Heart left ventricle (tissue), 16 donors: ENCODE measurements at regions of chr18 and their contacts with region 1.

Region 1: GRCh38 chr18:24118750-24119577 is 19.9 kb upstream of the CABYR start:
- DNase-seq: peak in 4 of 5 donors; percentile 42 to 69 (median 53)
- ATAC-seq: peak in 3 of 4 donors; percentile 59 to 75 (median 71)
- H3K4me3 ChIP-seq: no peak overlapping the region
- H3K27ac ChIP-seq: no peak overlapping the region
- H3K4me1 ChIP-seq: peaks cover 0 to 8% (median 0%) of the 10 kb centered on the region in 12 donors
- H3K27me3 ChIP-seq: no peaks in the 10 kb centered on the region
- CTCF ChIP-seq: peak; percentile 85 to 97 (median 94)
- POLR2A ChIP-seq: no peak

Region 2: GRCh38 chr18:23317975-23318675 is 800.8 kb before region 1 on chr18:
- intact Hi-C with region 1: no loop called
- DNase-seq: no peak
- ATAC-seq: no peak
- H3K4me3 ChIP-seq: no peak overlapping the region
- H3K27ac ChIP-seq: no peak overlapping the region
- H3K4me1 ChIP-seq: no peaks in the 10 kb centered on the region
- H3K27me3 ChIP-seq: no peaks in the 10 kb centered on the region
- CTCF ChIP-seq: no peak
- POLR2A ChIP-seq: no peak

Region 3: GRCh38 chr18:23619388-23619881 is 499.5 kb before region 1 on chr18:
- intact Hi-C with region 1: loop called in 5 of 10 experiments (anchors 5 to 10 kb)
- DNase-seq: peak in 4 of 5 donors; percentile 19 to 66 (median 36)
- ATAC-seq: peak; percentile 40 to 76 (median 69)
- H3K4me3 ChIP-seq: peak overlapping the region; percentile 16 to 66 (median 48)
- H3K27ac ChIP-seq: peak overlapping the region in 2 of 12 donors; percentile 36 to 39
- H3K4me1 ChIP-seq: peaks cover 0 to 15% (median 4%) of the 10 kb centered on the region in 12 donors
- H3K27me3 ChIP-seq: peaks cover 0 to 30% (median 0%) of the 10 kb centered on the region in 9 donors
- CTCF ChIP-seq: peak in 1 of 12 donors; percentile 26
- POLR2A ChIP-seq: no peak

Region 4: GRCh38 chr18:23812546-23813440 is 306.2 kb before region 1 on chr18:
- intact Hi-C with region 1: loop called in 4 of 10 experiments (anchors 5 to 10 kb)
- DNase-seq: no peak
- ATAC-seq: no peak
- H3K4me3 ChIP-seq: no peak overlapping the region
- H3K27ac ChIP-seq: no peak overlapping the region
- H3K4me1 ChIP-seq: peaks cover 0 to 9% (median 0%) of the 10 kb centered on the region in 12 donors
- H3K27me3 ChIP-seq: no peaks in the 10 kb centered on the region
- CTCF ChIP-seq: peak; percentile 45 to 74 (median 59)
- POLR2A ChIP-seq: no peak

Region 5: GRCh38 chr18:23837591-23837990 is 281.4 kb before region 1 on chr18:
- intact Hi-C with region 1: loop called in 1 of 10 experiments (anchors 10 kb)
- DNase-seq: no peak
- ATAC-seq: peak in 3 of 4 donors; percentile 79 to 83 (median 81)
- H3K4me3 ChIP-seq: no peak overlapping the region
- H3K27ac ChIP-seq: peak overlapping the region in 8 of 12 donors; percentile 27 to 59 (median 35)
- H3K4me1 ChIP-seq: peaks cover 0 to 19% (median 9%) of the 10 kb centered on the region in 12 donors
- H3K27me3 ChIP-seq: no peaks in the 10 kb centered on the region
- CTCF ChIP-seq: no peak
- POLR2A ChIP-seq: no peak

Region 6: GRCh38 chr18:23900994-23901393 is 218.0 kb before region 1 on chr18:
- intact Hi-C with region 1: no loop called
- DNase-seq: peak in 1 of 5 donors; percentile 24
- ATAC-seq: peak in 3 of 4 donors; percentile 31 to 55 (median 38)
- H3K4me3 ChIP-seq: no peak overlapping the region
- H3K27ac ChIP-seq: no peak overlapping the region
- H3K4me1 ChIP-seq: peaks cover 0 to 8% (median 0%) of the 10 kb centered on the region in 12 donors
- H3K27me3 ChIP-seq: no peaks in the 10 kb centered on the region
- CTCF ChIP-seq: no peak
- POLR2A ChIP-seq: no peak

Region 7: DNA sequence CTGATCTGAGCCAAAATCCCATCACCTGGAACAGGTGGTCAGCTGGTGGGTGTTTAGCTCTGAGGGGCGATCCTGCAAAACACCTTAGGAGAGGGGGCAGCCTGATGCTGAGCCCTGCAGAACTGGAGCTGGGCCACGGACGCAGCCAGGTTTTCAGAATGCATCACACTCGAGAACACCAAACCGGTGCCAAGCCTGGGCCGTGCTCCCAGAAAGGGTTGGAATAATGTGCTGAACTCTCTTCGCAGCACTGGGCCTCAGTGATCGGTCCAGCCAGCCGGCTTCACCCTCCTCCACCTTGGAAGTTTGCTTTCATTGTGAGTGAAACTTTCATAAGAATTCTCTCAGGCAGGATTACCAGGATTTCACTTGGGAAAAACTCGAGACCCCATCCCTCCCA is 160.9 kb before region 1 on chr18:
- intact Hi-C with region 1: loop called in 6 of 10 experiments (anchors 5 to 10 kb)
- DNase-seq: peak; percentile 72 to 89 (median 81)
- ATAC-seq: peak; percentile 95 to 98 (median 98)
- H3K4me3 ChIP-seq: no peak overlapping the region
- H3K27ac ChIP-seq: peak overlapping the region in 3 of 12 donors; percentile 13 to 46 (median 35)
- H3K4me1 ChIP-seq: peaks cover 0 to 5% (median 0%) of the 10 kb centered on the region in 12 donors
- H3K27me3 ChIP-seq: no peaks in the 10 kb centered on the region
- CTCF ChIP-seq: no peak
- POLR2A ChIP-seq: no peak

Region 8: DNA sequence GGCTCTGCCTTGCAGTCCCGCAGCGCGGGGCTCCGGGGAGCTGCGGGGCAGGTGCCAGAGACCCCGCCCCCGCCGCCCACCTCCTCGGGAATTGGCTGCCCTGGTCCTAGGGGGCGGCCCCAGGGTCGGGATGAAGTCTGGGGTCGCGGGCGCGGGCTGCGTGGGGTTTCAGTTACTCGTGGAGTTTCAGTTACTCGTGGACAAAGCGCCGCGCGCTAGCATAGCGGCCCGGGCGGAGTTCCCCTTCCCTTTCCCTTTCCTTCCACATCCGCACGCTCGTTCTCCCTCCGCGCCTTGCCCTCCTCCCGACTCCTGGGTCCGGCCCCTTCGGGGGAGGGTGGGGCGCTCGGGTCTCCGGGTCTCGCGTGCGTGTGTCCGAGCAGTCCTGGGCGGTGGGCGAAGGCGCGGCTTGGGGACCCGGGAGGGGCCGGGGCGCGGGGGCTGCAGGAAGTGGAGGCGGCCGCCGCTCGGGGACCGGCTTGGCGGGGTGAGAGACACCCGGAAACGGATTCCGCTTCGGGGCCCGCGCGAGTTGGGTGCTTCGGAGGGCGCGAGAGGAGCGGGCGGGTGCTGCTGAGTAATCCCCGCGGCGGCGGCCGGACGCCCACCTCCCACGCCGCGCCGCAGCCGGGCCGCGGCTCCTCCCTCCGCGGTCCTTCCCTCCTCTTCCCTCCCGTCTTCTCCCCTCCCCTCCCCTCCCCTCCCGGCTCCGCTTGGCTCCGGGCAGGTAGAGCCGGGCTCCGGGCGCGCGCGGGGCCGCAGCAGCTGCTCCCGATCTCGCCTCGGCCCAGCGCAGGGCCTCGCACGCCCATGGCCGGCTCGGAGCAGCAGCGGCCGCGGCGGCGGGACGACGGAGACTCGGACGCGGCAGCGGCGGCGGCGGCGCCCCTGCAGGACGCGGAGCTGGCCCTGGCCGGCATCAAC is 104.6 kb before region 1 on chr18 and contains the start of gene TTC39C:
- intact Hi-C with region 1: loop called in 5 of 10 experiments (anchors 5 to 10 kb)
- DNase-seq: peak; percentile 66 to 87 (median 71)
- ATAC-seq: peak in 3 of 4 donors; percentile 78 to 92 (median 89)
- H3K4me3 ChIP-seq: peak within 1 kb of the TSS; percentile 67 to 99 (median 93)
- H3K27ac ChIP-seq: peak within 1 kb of the TSS; percentile 6 to 95 (median 76)
- H3K4me1 ChIP-seq: peaks cover 0 to 75% (median 6%) of the 10 kb centered on the region in 12 donors
- H3K27me3 ChIP-seq: no peaks in the 10 kb centered on the region
- CTCF ChIP-seq: no peak
- POLR2A ChIP-seq: no peak
- total RNA-seq, gene TTC39C: 2.7 to 12.8 (median 4.8) TPM